Activated T-helper 2 cell treated with anti-CD3 and anti-CD28 coated beads, Interferon-gamma antibody, Interleukin-2, Interleukin-4, amounts not matched to agents 10 μg/mL and 5 μg/mL and 100 μg/mL, durations not matched to agents 14 hours and 24 hours and 36 hours (primary cell): ENCODE measurements at regions of chr17 and their contacts with region 1.

Region 1: GRCh38 chr17:32349854-32350665 is at the start of gene ZNF207:
- DNase-seq: peak; percentile 95
- H3K4me3 Mint-ChIP-seq: peak within 1 kb of the TSS; percentile 92
- H3K27ac Mint-ChIP-seq: peak within 1 kb of the TSS; percentile 99
- H3K4me1 Mint-ChIP-seq: peaks cover 25% of the 10 kb centered on the region
- H3K27me3 Mint-ChIP-seq: no peaks in the 10 kb centered on the region
- total RNA-seq, gene ZNF207: 254 and 256 TPM in 2 replicates

Region 2: DNA sequence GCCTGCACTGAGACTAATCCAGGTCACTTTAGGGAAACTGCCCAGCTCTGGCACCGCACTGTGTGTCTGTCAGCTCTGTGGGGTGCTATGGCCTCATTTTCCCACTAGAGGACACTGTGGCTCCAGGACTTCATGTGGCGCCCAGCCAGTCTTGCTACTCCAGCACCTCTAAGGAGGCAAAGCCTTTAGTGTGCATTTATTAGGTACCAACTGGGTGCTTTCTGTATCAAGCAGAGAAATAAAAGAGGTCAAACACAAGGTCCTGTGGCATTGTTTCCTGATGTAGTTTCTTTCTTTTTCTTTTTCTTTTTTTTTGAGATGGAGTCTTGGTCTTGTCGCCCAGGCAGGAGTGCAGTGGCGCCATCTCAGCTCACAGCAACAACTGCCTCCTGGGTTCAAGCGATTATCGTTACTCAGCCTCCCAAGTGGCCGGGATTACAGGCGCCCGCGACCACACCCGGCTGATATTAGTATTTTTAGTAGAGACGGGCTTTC is 96.9 kb before region 1 on chr17:
- intact Hi-C with region 1: loop called (anchors 1 kb)
- DNase-seq: peak; percentile 66
- H3K4me3 Mint-ChIP-seq: no peak overlapping the region
- H3K27ac Mint-ChIP-seq: no peak overlapping the region
- H3K4me1 Mint-ChIP-seq: peaks cover 4% of the 10 kb centered on the region
- H3K27me3 Mint-ChIP-seq: peaks cover 43% of the 10 kb centered on the region

Region 3: DNA sequence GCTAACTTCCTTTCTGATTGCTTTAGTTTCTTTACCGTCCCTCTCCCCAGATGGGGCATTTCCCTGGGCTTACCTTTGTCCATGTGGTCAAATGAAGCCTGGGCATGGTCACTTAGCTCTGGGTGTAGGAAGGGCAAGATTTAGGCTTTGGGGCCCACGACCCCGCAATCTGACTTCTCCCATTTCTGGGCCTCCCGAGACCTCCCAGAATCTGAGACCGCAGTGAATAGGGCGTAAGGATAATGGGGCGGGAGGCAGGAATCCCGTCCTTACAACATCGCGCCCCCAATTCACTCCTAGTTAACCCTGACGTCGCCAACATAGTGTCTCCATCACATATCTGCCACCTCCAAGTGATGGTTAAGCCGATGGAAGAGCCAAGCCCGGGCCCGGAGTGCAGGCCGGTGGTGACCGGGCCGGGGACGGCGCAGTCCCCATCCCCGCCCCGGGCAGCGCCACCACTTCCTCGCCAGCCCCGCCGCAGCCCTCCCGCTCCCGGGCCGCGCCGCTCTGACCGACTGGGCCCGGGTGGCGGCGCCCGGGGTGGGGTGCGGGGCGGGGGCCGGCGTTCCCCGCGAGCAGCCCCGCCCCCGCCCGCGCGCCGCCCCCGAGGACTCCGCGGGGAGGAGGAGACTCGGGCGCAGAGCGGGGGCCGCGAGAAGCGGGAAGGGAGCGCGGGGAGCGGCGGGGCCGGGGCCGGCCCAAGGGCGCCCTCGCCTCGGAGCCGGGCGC is 84.7 kb before region 1 on chr17 and contains the start of gene RHBDL3:
- intact Hi-C with region 1: no loop called
- DNase-seq: no peak
- H3K4me3 Mint-ChIP-seq: peak within 1 kb of the TSS; percentile 73
- H3K27ac Mint-ChIP-seq: no peak within 1 kb of the TSS
- H3K4me1 Mint-ChIP-seq: peaks cover 16% of the 10 kb centered on the region
- H3K27me3 Mint-ChIP-seq: peaks cover 75% of the 10 kb centered on the region
- total RNA-seq, gene RHBDL3: 0.11 and 0.18 TPM in 2 replicates